T-cell (primary cell): ENCODE measurements at regions of chr12 and their contacts with region 1.

Region 1: DNA sequence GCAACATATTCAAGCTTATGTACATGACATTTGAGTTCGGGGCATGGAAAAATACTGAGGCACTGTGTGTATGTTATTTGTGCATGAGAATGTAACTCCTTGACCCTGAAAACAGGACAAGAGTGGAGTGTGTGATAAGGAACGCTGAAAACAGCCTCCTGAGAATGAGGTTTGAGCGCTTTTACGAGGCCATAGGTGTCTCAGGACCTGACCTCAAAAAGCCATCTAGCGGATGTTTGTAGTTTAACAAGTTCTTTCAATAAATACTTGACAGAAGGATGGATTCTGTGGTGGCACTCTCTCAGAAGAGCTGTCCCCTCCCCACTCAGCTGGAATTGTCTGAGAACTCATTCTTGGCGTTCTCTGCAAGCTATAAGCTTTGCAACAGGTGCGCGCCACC is 350.5 kb upstream of the TMTC1 start:
- DNase-seq: no peak
- ATAC-seq: no peak
- H3K4me3 ChIP-seq: no peak overlapping the region
- H3K4me3 Mint-ChIP-seq: no peak overlapping the region
- H3K27ac ChIP-seq: no peak overlapping the region
- H3K27ac Mint-ChIP-seq: no peak overlapping the region
- H3K4me1 ChIP-seq: no peaks in the 10 kb centered on the region
- H3K4me1 Mint-ChIP-seq: no peaks in the 10 kb centered on the region
- H3K27me3 ChIP-seq: no peaks in the 10 kb centered on the region
- H3K27me3 Mint-ChIP-seq: no peaks in the 10 kb centered on the region

Region 2: DNA sequence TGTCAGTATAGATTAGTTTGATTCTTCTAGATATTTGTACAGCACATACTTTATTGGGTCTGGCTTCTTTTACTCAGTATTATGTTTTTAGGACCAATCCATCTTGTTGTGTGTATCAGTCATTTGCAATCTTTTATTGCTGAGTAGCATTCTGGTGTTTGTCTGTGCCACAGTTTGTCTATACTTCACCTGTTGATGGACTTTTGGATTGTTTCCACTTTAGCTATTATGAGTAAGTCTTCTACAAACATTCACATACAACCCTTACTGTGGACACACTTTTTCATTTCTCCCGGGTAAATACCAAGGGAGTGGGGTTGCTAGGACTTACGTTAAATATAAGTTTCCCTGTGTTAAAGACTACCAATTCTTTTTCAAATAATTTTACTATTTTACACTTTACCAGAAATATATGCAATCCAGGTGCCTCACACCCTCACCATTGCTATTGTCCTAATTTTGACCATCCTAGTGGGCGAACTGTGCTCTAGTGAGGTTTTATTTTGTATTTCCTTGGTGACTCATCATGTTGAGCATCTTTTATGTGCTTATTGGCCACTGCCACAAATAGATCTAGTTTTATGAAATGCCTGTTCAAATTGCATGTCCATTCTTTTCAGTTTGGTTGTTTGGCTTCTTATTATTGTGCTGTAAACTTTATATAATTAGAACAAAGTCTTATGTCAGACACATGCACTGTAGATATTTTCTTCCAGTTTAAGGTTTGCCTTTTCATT is 45.8 kb before region 1 on chr12:
- CTCF ChIA-PET with region 1: no interaction called
- POLR2A ChIA-PET with region 1: no interaction called
- DNase-seq: no peak
- ATAC-seq: no peak
- H3K4me3 ChIP-seq: no peak overlapping the region
- H3K4me3 Mint-ChIP-seq: no peak overlapping the region
- H3K27ac ChIP-seq: no peak overlapping the region
- H3K27ac Mint-ChIP-seq: no peak overlapping the region
- H3K4me1 ChIP-seq: no peaks in the 10 kb centered on the region
- H3K4me1 Mint-ChIP-seq: no peaks in the 10 kb centered on the region
- H3K27me3 ChIP-seq: no peaks in the 10 kb centered on the region
- H3K27me3 Mint-ChIP-seq: no peaks in the 10 kb centered on the region

Region 3: DNA sequence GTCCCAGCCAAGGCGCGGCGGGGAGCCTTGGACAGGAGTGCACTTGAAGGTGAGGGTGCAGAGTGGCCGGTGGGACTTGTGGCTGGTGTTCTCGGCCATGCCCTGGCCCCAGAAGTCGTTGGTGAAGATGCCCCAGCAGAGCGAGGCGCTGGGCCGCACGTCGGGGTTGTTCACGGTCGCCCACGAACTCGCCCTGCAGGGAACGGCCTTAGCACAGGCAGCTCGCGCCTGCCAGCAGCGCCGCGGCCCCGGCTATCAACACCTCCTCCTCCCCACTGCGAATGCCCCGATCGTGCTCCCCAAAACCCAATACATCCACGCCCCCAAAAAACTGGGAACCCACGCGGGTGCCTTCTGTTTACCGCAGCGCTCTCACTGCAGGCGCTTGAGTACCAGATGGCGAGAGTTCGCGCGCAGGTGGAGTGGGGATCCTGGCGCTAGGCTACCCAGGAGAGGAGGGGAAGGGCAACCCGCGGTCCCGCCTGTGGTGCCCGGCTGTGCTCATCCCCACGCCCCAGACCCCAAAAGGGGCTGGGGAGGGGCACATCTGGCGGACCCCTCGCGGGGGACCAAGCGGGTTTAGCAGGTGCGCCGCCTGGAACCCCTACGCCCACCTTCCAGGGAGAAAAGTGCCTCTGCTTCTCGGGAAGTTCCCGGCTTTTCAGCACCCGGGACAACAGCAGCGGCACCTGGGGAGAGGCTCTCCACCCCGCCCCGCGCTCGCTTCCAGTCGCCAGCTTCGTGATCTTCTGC is 35.8 kb after region 1 on chr12:
- CTCF ChIA-PET with region 1: no interaction called
- POLR2A ChIA-PET with region 1: interaction called in 1 of 2 experiments, 18 read pairs
- DNase-seq: no peak
- ATAC-seq: no peak
- H3K4me3 ChIP-seq: no peak overlapping the region
- H3K4me3 Mint-ChIP-seq: no peak overlapping the region
- H3K27ac ChIP-seq: no peak overlapping the region
- H3K27ac Mint-ChIP-seq: no peak overlapping the region
- H3K4me1 ChIP-seq: no peaks in the 10 kb centered on the region
- H3K4me1 Mint-ChIP-seq: no peaks in the 10 kb centered on the region
- H3K27me3 ChIP-seq: peaks cover 9 to 11% of the 10 kb centered on the region in 2 experiments
- H3K27me3 Mint-ChIP-seq: peaks cover 4 to 10% of the 10 kb centered on the region in 2 donors

Region 4: DNA sequence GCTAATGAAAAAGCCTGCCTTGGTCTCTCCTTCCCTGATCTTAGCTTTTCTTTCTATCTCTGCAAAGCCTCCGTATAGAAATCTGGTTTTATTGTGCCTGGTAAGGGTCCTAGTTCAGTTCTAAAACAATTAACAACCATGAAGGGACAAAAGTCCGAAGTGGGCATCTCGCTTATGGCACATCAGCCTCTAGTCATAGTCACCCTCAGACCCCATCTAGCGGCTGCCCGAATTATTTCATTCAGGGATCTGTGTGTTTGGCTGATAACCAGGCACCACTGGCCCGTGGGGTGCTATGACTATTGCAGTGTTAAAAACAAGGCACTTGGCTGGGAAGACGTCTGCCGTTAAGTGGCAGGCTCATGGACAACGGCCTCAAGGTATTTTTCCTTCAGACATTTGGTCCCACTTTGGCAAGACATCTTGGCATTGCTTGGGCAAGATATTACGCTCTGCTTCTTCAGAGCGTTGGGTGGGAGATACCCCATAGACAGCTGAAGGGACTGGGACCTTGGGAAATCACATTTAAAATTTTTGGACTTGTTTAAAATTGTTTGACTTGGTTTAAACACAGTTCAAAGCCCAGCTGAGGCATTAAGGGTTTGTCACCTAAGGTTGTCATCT is 1104.6 kb after region 1 on chr12:
- CTCF ChIA-PET with region 1: no interaction called
- POLR2A ChIA-PET with region 1: no interaction called
- DNase-seq: peak in 30 of 35 experiments; percentile 5 to 53 (median 34)
- ATAC-seq: peak; percentile 54 to 72 (median 60)
- H3K4me3 ChIP-seq: no peak overlapping the region
- H3K4me3 Mint-ChIP-seq: no peak overlapping the region
- H3K27ac ChIP-seq: no peak overlapping the region
- H3K27ac Mint-ChIP-seq: no peak overlapping the region
- H3K4me1 ChIP-seq: no peaks in the 10 kb centered on the region
- H3K4me1 Mint-ChIP-seq: peaks cover 0 to 5% (median 2%) of the 10 kb centered on the region in 3 donors
- H3K27me3 ChIP-seq: peaks cover 0 to 13% of the 10 kb centered on the region in 2 experiments
- H3K27me3 Mint-ChIP-seq: peaks cover 17 to 19% of the 10 kb centered on the region in 2 donors